CD8-positive, alpha-beta T cell (primary cell): ENCODE measurements at regions of chr20 and their contacts with region 1.

Region 1: DNA sequence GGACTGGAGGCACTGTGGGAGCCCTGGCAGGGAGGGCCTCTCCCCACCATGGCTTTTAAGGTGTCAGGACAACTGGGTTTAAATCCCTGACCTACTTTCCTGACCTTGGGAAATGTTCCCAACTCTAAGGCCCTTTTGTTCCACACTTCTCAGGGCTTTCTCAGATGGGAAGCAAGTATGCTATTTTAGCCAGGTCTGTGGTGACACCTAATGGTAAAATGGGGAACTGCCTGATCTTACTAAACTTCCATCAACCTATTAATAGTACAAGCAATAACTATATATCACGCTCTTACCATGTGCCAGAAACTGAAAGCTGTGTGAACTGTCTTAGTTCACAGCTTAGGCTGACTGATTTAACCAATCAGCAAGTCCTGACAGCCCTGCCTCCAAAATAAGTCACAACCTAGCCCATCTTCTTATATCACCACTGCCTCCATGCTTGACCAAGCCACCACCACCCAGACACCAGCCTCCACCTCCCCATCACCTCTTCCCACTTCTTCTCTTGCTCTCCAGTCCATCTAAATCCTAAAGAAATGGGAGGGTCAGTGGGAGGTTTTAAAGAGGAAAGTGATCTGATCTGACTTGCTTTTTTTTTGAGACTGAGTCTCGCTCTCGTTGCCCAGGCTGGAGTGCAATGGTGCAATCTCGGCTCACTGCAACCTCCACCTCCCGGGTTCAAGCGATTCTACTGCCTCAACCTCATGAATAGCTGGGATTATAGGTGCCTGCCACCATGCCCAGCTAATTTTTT is 6.9 kb upstream of the BLCAP start:
- DNase-seq: peak in 6 of 9 experiments; percentile 25 to 83 (median 57)
- ATAC-seq: peak; percentile 96
- H3K4me3 ChIP-seq: no peak overlapping the region
- H3K4me3 Mint-ChIP-seq: no peak overlapping the region
- H3K27ac ChIP-seq: no peak overlapping the region
- H3K27ac Mint-ChIP-seq: no peak overlapping the region
- H3K4me1 ChIP-seq: no peaks in the 10 kb centered on the region
- H3K4me1 Mint-ChIP-seq: no peaks in the 10 kb centered on the region
- H3K27me3 ChIP-seq: no peaks in the 10 kb centered on the region
- H3K27me3 Mint-ChIP-seq: peaks cover 10% of the 10 kb centered on the region
- CTCF ChIP-seq: peak; percentile 95

Region 2: GRCh38 chr20:36919715-36920333 is 614.8 kb before region 1 on chr20:
- CTCF ChIA-PET with region 1: no interaction called
- POLR2A ChIA-PET with region 1: no interaction called
- intact Hi-C with region 1: loop called in 1 of 2 experiments (anchors 10 kb)
- DNase-seq: peak in 4 of 9 experiments; percentile 8 to 78 (median 52)
- ATAC-seq: peak; percentile 93
- H3K4me3 ChIP-seq: no peak overlapping the region
- H3K4me3 Mint-ChIP-seq: no peak overlapping the region
- H3K27ac ChIP-seq: peak overlapping the region in 1 of 2 experiments; percentile 13
- H3K27ac Mint-ChIP-seq: peak overlapping the region; percentile 66
- H3K4me1 ChIP-seq: peaks cover 22% of the 10 kb centered on the region
- H3K4me1 Mint-ChIP-seq: peaks cover 21% of the 10 kb centered on the region
- H3K27me3 ChIP-seq: no peaks in the 10 kb centered on the region
- H3K27me3 Mint-ChIP-seq: no peaks in the 10 kb centered on the region
- CTCF ChIP-seq: peak; percentile 96

Region 3: GRCh38 chr20:37202267-37202943 is 332.2 kb before region 1 on chr20:
- CTCF ChIA-PET with region 1: interaction called, 77 read pairs
- POLR2A ChIA-PET with region 1: no interaction called
- intact Hi-C with region 1: loop called (anchors 1 kb)
- DNase-seq: peak in 5 of 9 experiments; percentile 19 to 54 (median 33)
- ATAC-seq: peak; percentile 46
- H3K4me3 ChIP-seq: no peak overlapping the region
- H3K4me3 Mint-ChIP-seq: no peak overlapping the region
- H3K27ac ChIP-seq: no peak overlapping the region
- H3K27ac Mint-ChIP-seq: peak overlapping the region; percentile 18
- H3K4me1 ChIP-seq: no peaks in the 10 kb centered on the region
- H3K4me1 Mint-ChIP-seq: peaks cover 4% of the 10 kb centered on the region
- H3K27me3 ChIP-seq: no peaks in the 10 kb centered on the region
- H3K27me3 Mint-ChIP-seq: no peaks in the 10 kb centered on the region
- CTCF ChIP-seq: peak; percentile 56

Region 4: DNA sequence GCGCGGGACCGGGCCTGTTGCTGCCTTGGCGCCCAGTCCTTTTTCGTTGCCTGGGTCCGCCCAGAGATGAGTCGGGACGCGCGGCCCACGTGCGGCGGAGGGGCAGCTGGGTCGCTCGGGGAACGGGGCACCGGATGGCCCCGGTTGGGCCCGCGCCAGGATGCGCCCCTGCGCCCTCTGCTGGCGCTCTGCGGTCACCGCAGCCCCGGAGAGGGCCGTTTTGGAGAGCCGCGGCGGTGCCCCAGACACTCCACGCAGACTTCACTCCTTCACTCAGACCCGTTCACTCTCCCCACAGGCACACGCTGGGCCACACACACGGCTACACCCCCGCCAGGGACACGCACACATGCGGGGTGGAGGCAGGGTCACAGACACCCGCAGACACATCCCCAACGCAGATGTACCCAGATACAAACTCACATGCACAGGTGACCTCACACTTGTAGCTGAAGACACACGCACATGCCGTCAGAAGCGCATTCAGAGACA is 149.8 kb before region 1 on chr20:
- CTCF ChIA-PET with region 1: interaction called, 10 read pairs
- POLR2A ChIA-PET with region 1: no interaction called
- intact Hi-C with region 1: loop called (anchors 1 kb)
- DNase-seq: peak; percentile 65 to 91 (median 74)
- ATAC-seq: peak; percentile 95
- H3K4me3 ChIP-seq: peak overlapping the region; percentile 41 to 46
- H3K4me3 Mint-ChIP-seq: peak overlapping the region; percentile 85
- H3K27ac ChIP-seq: no peak overlapping the region
- H3K27ac Mint-ChIP-seq: no peak overlapping the region
- H3K4me1 ChIP-seq: peaks cover 5% of the 10 kb centered on the region
- H3K4me1 Mint-ChIP-seq: peaks cover 8% of the 10 kb centered on the region
- H3K27me3 ChIP-seq: no peaks in the 10 kb centered on the region
- H3K27me3 Mint-ChIP-seq: peaks cover 3% of the 10 kb centered on the region
- CTCF ChIP-seq: peak; percentile 79

Region 5: DNA sequence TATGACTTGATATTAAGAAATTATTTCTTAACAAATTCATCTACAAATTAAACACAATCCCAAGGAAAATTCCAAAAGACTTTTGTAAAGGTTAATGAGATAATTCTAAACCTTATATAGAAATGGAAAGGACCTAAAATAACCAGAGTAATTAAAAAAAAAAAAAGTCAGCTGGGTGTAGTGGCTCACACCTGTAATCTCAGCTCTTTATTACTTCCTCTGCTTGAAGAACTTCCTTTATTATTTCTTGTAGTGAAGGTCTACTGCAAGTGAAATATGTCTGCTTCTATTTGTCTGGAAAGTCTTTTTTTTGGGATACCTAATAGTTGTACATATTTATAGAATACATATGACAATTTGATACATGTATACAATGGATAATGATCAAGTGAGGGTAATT is 13.3 kb after region 1 on chr20:
- CTCF ChIA-PET with region 1: interaction called, 10 read pairs
- POLR2A ChIA-PET with region 1: no interaction called
- intact Hi-C with region 1: no loop called
- DNase-seq: no peak
- ATAC-seq: no peak
- H3K4me3 ChIP-seq: no peak overlapping the region
- H3K4me3 Mint-ChIP-seq: no peak overlapping the region
- H3K27ac ChIP-seq: no peak overlapping the region
- H3K27ac Mint-ChIP-seq: no peak overlapping the region
- H3K4me1 ChIP-seq: no peaks in the 10 kb centered on the region
- H3K4me1 Mint-ChIP-seq: no peaks in the 10 kb centered on the region
- H3K27me3 ChIP-seq: no peaks in the 10 kb centered on the region
- H3K27me3 Mint-ChIP-seq: peaks cover 12% of the 10 kb centered on the region
- CTCF ChIP-seq: no peak